Body of pancreas (tissue), 4 donors: ENCODE measurements at regions of chr14 and their contacts with region 1.

Region 1: GRCh38 chr14:96100161-96101029 is 61.2 kb downstream of the C14orf132 start:
- DNase-seq: peak; percentile 86 to 90 (median 88)
- ATAC-seq: peak; percentile 70
- H3K4me3 ChIP-seq: no peak overlapping the region
- H3K27ac ChIP-seq: peak overlapping the region in 1 of 4 donors; percentile 9
- H3K4me1 ChIP-seq: peaks cover 27% of the 10 kb centered on the region
- H3K27me3 ChIP-seq: no peaks in the 10 kb centered on the region
- CTCF ChIP-seq: peak; percentile 88 to 98 (median 96)
- POLR2A ChIP-seq: no peak

Region 2: DNA sequence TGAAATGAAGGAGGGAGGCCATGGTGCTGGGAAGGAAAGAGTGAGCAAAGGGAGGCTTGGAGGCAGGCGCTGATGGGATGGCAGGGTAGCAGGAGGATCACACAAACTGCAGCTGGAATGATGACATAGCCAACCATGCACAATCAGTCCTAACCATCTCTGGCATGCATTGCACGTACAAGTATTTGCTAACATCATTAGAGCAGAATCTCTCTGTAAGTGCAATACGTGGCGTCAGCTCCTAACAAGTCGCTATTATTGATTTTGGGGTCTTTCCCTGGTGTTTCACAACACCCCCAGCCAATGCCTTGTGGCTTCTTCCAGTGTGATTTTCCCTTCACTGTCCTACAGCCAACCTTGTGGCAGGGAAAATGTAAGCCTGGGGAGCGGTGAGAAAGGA is 174.1 kb after region 1 on chr14:
- intact Hi-C with region 1: loop called (anchors 5 kb)
- DNase-seq: peak in 1 of 4 donors; percentile 31
- ATAC-seq: peak; percentile 47
- H3K4me3 ChIP-seq: no peak overlapping the region
- H3K27ac ChIP-seq: peak overlapping the region in 3 of 4 donors; percentile 49 to 74 (median 74)
- H3K4me1 ChIP-seq: peaks cover 30% of the 10 kb centered on the region
- H3K27me3 ChIP-seq: no peaks in the 10 kb centered on the region
- CTCF ChIP-seq: no peak
- POLR2A ChIP-seq: no peak

Region 3: GRCh38 chr14:96424109-96424989 is 324.0 kb after region 1 on chr14:
- intact Hi-C with region 1: loop called (anchors 10 kb)
- DNase-seq: peak; percentile 33 to 52 (median 41)
- ATAC-seq: peak; percentile 96
- H3K4me3 ChIP-seq: peak overlapping the region in 1 of 2 donors; percentile 8
- H3K27ac ChIP-seq: no peak overlapping the region
- H3K4me1 ChIP-seq: no peaks in the 10 kb centered on the region
- H3K27me3 ChIP-seq: no peaks in the 10 kb centered on the region
- CTCF ChIP-seq: peak; percentile 50 to 88 (median 80)
- POLR2A ChIP-seq: no peak